Astrocyte of the cerebellum (primary cell): ENCODE measurements at regions of chr15 and their contacts with region 1.

Region 1: DNA sequence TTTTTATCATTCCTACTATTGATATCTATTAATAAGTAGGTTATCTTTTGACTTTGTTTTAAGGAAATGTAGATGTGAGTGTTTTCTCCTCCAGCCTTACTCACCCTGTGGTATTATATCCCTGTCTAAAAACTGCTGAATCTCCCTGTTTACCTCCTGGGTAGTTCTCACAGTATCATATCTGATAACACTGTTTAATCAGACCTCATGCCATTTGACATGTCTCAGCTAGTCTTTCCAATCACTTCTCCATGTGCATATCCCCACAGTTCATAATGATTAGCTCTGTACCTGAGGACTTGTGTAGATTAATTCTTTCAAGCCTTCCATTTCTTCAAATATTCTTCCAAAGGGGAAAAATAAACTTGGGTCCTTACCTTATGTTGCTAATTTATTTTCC is 30.7 kb downstream of the DUOX2 start:
- DNase-seq: no peak
- H3K4me3 ChIP-seq: no peak overlapping the region
- CTCF ChIP-seq: no peak

Region 2: DNA sequence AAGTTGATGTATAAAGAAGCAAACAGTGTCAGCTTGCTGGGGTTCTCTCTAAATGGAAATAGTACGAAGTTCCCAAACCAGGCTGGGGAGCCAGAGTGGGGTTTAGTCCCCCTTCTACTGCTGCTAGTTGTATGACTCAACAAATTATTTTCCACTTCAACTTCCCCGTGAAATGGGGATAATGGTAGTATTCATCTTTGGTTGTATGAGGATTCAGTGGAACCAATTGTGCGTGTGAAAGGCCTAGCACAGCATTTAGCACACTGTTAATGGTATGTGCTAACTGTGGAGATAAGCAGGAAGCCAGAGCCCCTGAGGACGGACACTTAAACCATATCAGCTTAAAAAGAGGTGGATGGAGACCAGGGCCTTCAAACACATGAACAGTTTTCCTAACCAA is 56.0 kb before region 1 on chr15:
- in situ Hi-C with region 1: loop called (anchors 5 kb)
- DNase-seq: no peak
- H3K4me3 ChIP-seq: no peak overlapping the region
- CTCF ChIP-seq: no peak